CD8-positive, alpha-beta T cell (primary cell): ENCODE measurements at regions of chr7 and their contacts with region 1.

Region 1: DNA sequence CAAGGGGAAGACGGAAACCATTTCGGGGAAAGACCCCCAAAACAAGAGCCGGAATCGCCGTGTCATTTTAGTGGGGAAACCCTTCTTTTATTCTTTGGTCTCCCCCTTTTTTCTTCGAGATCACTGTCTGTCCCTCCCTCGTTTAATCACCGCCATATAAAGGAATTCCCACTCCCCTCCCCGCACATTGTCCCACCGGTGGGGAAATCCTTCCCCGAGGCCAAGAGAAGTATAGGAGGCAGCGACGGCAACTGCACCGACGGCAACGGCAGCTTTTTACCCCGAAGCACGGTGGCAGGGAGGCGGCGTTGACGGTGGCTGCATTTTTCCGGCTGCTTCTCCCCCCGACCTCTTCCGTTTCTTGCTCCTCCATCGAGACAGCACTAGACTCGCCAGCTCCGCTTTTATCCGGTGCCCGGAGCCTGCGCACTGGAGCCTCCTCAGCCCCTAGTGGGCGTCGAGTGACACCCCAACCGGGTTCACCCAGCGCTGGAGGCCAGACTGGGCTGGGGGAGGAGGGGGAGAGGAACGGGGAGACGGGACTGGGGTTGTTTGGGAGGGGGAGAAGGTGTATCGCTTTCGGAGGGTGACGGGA is 687 bp upstream of the KMT2E start:
- DNase-seq: peak; percentile 91 to 97 (median 94)
- ATAC-seq: peak; percentile 56
- H3K4me3 ChIP-seq: peak overlapping the region; percentile 97 to 99
- H3K4me3 Mint-ChIP-seq: peak overlapping the region; percentile 99
- H3K27ac ChIP-seq: peak overlapping the region; percentile 99
- H3K27ac Mint-ChIP-seq: peak overlapping the region; percentile 100
- H3K4me1 ChIP-seq: peaks cover 42% of the 10 kb centered on the region
- H3K4me1 Mint-ChIP-seq: peaks cover 46% of the 10 kb centered on the region
- H3K27me3 ChIP-seq: no peaks in the 10 kb centered on the region
- H3K27me3 Mint-ChIP-seq: no peaks in the 10 kb centered on the region
- CTCF ChIP-seq: peak; percentile 52

Region 2: GRCh38 chr7:103680161-103681144 is 1332.9 kb before region 1 on chr7:
- CTCF ChIA-PET with region 1: no interaction called
- POLR2A ChIA-PET with region 1: no interaction called
- intact Hi-C with region 1: no loop called
- DNase-seq: no peak
- ATAC-seq: no peak
- H3K4me3 ChIP-seq: no peak overlapping the region
- H3K4me3 Mint-ChIP-seq: no peak overlapping the region
- H3K27ac ChIP-seq: no peak overlapping the region
- H3K27ac Mint-ChIP-seq: no peak overlapping the region
- H3K4me1 ChIP-seq: no peaks in the 10 kb centered on the region
- H3K4me1 Mint-ChIP-seq: no peaks in the 10 kb centered on the region
- H3K27me3 ChIP-seq: no peaks in the 10 kb centered on the region
- H3K27me3 Mint-ChIP-seq: no peaks in the 10 kb centered on the region
- CTCF ChIP-seq: no peak

Region 3: GRCh38 chr7:104943502-104944343 is 69.6 kb before region 1 on chr7:
- CTCF ChIA-PET with region 1: interaction called, 5 read pairs
- POLR2A ChIA-PET with region 1: interaction called, 32 read pairs
- intact Hi-C with region 1: loop called in 1 of 2 experiments (anchors 1 kb)
- DNase-seq: peak; percentile 40 to 86 (median 69)
- ATAC-seq: peak; percentile 24
- H3K4me3 ChIP-seq: peak overlapping the region; percentile 10 to 18
- H3K4me3 Mint-ChIP-seq: peak overlapping the region; percentile 83
- H3K27ac ChIP-seq: peak overlapping the region; percentile 98
- H3K27ac Mint-ChIP-seq: peak overlapping the region; percentile 100
- H3K4me1 ChIP-seq: peaks cover 52% of the 10 kb centered on the region
- H3K4me1 Mint-ChIP-seq: peaks cover 64% of the 10 kb centered on the region
- H3K27me3 ChIP-seq: no peaks in the 10 kb centered on the region
- H3K27me3 Mint-ChIP-seq: no peaks in the 10 kb centered on the region
- CTCF ChIP-seq: no peak

Region 4: GRCh38 chr7:105028004-105028403 is 14.7 kb after region 1 on chr7:
- CTCF ChIA-PET with region 1: interaction called, 5 read pairs
- POLR2A ChIA-PET with region 1: interaction called, 21 read pairs
- intact Hi-C with region 1: loop called in 1 of 2 experiments (anchors 2 kb)
- DNase-seq: no peak
- ATAC-seq: no peak
- H3K4me3 ChIP-seq: no peak overlapping the region
- H3K4me3 Mint-ChIP-seq: peak overlapping the region; percentile 22
- H3K27ac ChIP-seq: no peak overlapping the region
- H3K27ac Mint-ChIP-seq: peak overlapping the region; percentile 32
- H3K4me1 ChIP-seq: peaks cover 78% of the 10 kb centered on the region
- H3K4me1 Mint-ChIP-seq: peaks cover 81% of the 10 kb centered on the region
- H3K27me3 ChIP-seq: no peaks in the 10 kb centered on the region
- H3K27me3 Mint-ChIP-seq: no peaks in the 10 kb centered on the region
- CTCF ChIP-seq: no peak

Region 5: GRCh38 chr7:105060437-105060836 is 47.1 kb after region 1 on chr7:
- CTCF ChIA-PET with region 1: interaction called, 3 read pairs
- POLR2A ChIA-PET with region 1: interaction called, 12 read pairs
- intact Hi-C with region 1: loop called in 1 of 2 experiments (anchors 5 kb)
- DNase-seq: no peak
- ATAC-seq: no peak
- H3K4me3 ChIP-seq: no peak overlapping the region
- H3K4me3 Mint-ChIP-seq: no peak overlapping the region
- H3K27ac ChIP-seq: no peak overlapping the region
- H3K27ac Mint-ChIP-seq: peak overlapping the region; percentile 58
- H3K4me1 ChIP-seq: peaks cover 40% of the 10 kb centered on the region
- H3K4me1 Mint-ChIP-seq: peaks cover 75% of the 10 kb centered on the region
- H3K27me3 ChIP-seq: no peaks in the 10 kb centered on the region
- H3K27me3 Mint-ChIP-seq: no peaks in the 10 kb centered on the region
- CTCF ChIP-seq: no peak

Region 6: GRCh38 chr7:105531792-105532671 is 518.7 kb after region 1 on chr7 and contains the start of gene RINT1:
- CTCF ChIA-PET with region 1: no interaction called
- POLR2A ChIA-PET with region 1: interaction called, 10 read pairs
- intact Hi-C with region 1: loop called in 1 of 2 experiments (anchors 2 kb)
- DNase-seq: peak; percentile 84 to 94 (median 87)
- ATAC-seq: peak; percentile 91
- H3K4me3 ChIP-seq: peak within 1 kb of the TSS; percentile 90 to 93
- H3K4me3 Mint-ChIP-seq: peak within 1 kb of the TSS; percentile 94
- H3K27ac ChIP-seq: peak within 1 kb of the TSS; percentile 75 to 85
- H3K27ac Mint-ChIP-seq: peak within 1 kb of the TSS; percentile 96
- H3K4me1 ChIP-seq: peaks cover 15% of the 10 kb centered on the region
- H3K4me1 Mint-ChIP-seq: peaks cover 43% of the 10 kb centered on the region
- H3K27me3 ChIP-seq: no peaks in the 10 kb centered on the region
- H3K27me3 Mint-ChIP-seq: no peaks in the 10 kb centered on the region
- CTCF ChIP-seq: peak; percentile 57
- total RNA-seq, gene RINT1: 46.3 to 50.8 TPM